Panc1 (cell line): ENCODE measurements at regions of chr3 and their contacts with region 1.

Region 1: GRCh38 chr3:32922078-32922477 is 29.4 kb upstream of the CCR4 start:
- DNase-seq: no peak
- ATAC-seq: no peak
- H3K4me3 ChIP-seq: no peak overlapping the region
- H3K27ac ChIP-seq: no peak overlapping the region
- H3K4me1 ChIP-seq: no peaks in the 10 kb centered on the region
- H3K27me3 ChIP-seq: no peaks in the 10 kb centered on the region
- CTCF ChIP-seq: no peak

Region 2: DNA sequence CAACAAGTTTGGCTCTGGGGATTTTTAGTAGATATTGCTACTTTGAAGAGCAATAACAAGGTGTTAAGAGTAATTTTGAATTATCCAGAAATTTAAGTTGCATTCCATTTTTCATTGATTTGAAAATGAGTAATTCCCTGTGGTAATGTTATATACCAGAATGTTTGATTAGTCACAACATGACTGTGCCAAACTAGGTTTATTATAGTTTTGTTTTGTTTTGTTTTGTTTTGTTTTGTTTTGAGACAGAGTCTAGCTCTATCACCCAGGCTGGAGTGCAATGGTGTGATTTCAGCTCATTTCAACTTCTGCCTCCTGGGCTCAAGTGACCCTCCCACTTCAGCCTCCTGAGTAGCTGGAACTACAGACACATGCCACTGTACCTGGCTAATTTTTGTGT is 196.4 kb before region 1 on chr3:
- CTCF ChIA-PET with region 1: no interaction called
- POLR2A ChIA-PET with region 1: interaction called, 12 read pairs
- in situ Hi-C with region 1: no loop called
- intact Hi-C with region 1: no loop called
- DNase-seq: no peak
- ATAC-seq: no peak
- H3K4me3 ChIP-seq: no peak overlapping the region
- H3K27ac ChIP-seq: no peak overlapping the region
- H3K4me1 ChIP-seq: no peaks in the 10 kb centered on the region
- H3K27me3 ChIP-seq: no peaks in the 10 kb centered on the region
- CTCF ChIP-seq: no peak